MCF 10A (cell line): ENCODE measurements at regions of chr16 and their contacts with region 1.

Region 1: DNA sequence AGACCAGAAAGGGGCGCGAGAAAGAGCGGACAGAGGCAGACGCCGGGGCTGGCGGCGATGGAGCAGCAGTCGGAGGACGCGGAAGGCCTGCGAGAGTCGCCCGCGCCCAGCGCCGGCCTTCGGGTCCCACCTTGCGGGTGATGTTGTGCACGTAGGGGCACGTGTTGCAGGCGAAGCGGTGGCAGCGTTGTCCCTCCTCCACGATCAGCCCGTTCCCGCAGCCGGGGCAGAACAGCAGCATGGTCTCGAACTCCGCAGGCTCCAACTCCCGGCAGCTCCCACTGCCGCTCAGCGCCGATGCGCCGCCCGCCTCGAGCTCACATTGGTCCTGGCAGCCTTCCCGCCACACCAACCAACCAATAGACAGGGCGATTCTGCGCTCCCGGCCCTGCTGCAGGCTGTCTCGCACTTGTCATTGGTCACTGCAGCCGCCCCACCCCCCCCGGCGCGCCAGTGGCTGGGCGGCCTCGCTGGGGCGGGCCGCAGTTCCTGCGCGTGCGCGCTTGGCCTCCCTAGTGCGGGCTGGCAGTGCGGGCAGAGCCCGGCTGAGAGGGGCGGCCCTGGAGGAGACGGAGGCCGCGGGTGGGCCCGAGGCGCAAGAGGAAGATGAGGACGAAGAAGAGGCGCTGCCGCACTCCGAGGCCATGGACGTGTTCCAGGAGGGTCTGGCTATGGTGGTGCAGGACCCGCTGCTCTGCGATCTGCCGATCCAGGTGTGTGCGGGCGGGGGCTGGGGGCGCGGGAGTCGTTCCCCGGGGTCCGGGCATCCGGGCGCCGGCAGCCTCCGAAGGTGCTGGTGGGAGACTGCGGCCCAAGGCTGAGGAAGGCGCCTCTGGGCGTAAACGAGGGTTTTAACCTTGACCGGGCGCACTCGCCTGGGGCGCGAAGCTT is at the starts of genes POLR3K and SNRNP25:
- DNase-seq: peak; percentile 97
- H3K4me3 Mint-ChIP-seq: peak within 1 kb of the TSS; percentile 98
- H3K27ac Mint-ChIP-seq: peak within 1 kb of the TSS; percentile 92
- H3K4me1 Mint-ChIP-seq: peaks cover 5% of the 10 kb centered on the region
- H3K27me3 Mint-ChIP-seq: no peaks in the 10 kb centered on the region
- CTCF ChIP-seq: no peak
- total RNA-seq, gene POLR3K: 14.8 and 19.2 TPM in 2 replicates
- total RNA-seq, gene SNRNP25: 11.9 and 21.2 TPM in 2 replicates

Region 2: DNA sequence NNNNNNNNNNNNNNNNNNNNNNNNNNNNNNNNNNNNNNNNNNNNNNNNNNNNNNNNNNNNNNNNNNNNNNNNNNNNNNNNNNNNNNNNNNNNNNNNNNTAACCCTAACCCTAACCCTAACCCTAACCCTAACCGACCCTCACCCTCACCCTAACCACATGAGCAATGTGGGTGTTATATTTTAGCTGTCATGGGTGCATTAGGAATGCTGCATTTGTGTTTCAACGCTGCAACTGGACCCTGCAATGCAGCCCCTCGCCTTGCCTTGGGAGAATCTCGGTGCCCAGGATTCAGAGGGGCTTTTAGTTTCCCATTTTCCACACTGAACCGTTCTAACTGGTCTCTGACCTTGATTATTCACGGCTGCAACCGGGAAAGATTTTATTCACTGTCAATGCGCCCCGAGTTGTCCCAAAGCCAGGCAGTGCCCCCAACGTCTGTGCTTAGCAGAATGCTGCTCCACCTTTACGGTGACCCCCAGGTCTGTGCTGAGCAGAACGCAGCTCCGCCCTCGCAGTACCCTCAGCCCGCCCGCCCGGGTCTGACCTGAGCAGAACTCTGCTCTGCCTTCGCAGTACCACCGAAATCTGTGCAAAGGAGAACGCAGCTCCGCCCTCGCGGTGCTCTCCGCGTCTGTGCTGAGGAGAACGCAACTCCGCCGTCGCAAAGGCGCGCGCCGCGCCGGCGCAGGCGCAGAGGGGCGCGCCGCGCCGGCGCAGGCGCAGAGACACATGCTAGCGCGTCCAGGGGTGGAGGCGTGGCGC is 43.5 kb before region 1 on chr16:
- CTCF ChIA-PET with region 1: no interaction called
- POLR2A ChIA-PET with region 1: no interaction called
- intact Hi-C with region 1: no loop called
- DNase-seq: no peak
- H3K4me3 Mint-ChIP-seq: peak overlapping the region; percentile 61
- H3K27ac Mint-ChIP-seq: no peak overlapping the region
- H3K4me1 Mint-ChIP-seq: no peaks in the 10 kb centered on the region
- H3K27me3 Mint-ChIP-seq: no peaks in the 10 kb centered on the region
- CTCF ChIP-seq: no peak

Region 3: GRCh38 chr16:65671-66137 is 12.1 kb after region 1 on chr16:
- CTCF ChIA-PET with region 1: interaction called, 24 read pairs
- POLR2A ChIA-PET with region 1: interaction called, 7 read pairs
- intact Hi-C with region 1: no loop called
- DNase-seq: peak; percentile 76
- H3K4me3 Mint-ChIP-seq: no peak overlapping the region
- H3K27ac Mint-ChIP-seq: no peak overlapping the region
- H3K4me1 Mint-ChIP-seq: no peaks in the 10 kb centered on the region
- H3K27me3 Mint-ChIP-seq: no peaks in the 10 kb centered on the region
- CTCF ChIP-seq: peak; percentile 98

Region 4: DNA sequence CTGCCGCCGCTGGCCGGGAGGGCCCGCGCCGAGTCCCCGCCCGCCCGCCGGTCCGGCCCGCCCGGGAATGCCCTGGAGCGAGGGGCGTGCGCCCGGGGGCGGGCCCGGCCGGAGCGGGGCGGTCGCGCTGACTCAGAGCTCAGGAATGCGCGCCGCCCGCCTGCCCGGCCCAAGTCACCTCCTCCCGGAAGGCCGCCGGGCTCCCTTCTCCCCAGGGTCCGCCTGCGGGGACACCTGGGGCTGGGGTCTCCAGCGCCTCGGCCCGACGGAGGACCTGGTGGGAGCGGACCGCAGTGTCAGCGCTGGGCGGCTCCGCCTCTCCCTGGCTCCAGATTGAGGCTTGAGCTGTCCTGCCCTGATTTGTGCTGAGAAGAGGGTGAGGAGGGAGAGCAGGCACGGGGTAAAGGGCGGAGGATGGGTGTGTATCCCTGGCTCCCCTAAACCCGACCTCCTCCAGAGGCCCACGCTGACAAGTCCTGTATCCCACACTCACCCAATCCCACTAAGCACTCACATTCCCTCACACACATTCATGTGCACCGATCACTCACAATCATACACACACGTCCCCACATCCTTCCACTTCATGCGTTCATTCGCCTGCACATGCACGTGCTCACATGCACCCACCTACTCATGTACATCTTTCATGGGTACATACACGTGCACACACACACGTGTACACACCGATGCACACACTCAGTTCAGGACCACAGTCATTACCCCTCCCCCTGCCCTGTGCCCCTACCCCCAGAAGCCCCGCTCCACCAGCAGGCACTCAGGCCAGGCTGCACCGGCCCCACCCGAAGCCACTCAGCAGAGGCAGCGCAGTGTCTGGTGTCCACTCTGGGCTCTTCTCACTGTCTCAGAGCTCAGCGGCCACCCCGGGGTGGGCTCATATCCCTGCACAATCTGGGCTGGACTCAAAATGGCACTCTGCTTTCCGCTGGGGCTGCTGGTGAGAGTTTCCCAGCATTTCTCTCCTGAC is 19.3 kb after region 1 on chr16 and contains the start of gene RHBDF1:
- CTCF ChIA-PET with region 1: interaction called, 3 read pairs
- POLR2A ChIA-PET with region 1: interaction called, 10 read pairs
- intact Hi-C with region 1: no loop called
- DNase-seq: peak; percentile 42
- H3K4me3 Mint-ChIP-seq: peak within 1 kb of the TSS; percentile 71
- H3K27ac Mint-ChIP-seq: peak within 1 kb of the TSS; percentile 62
- H3K4me1 Mint-ChIP-seq: peaks cover 24% of the 10 kb centered on the region
- H3K27me3 Mint-ChIP-seq: no peaks in the 10 kb centered on the region
- CTCF ChIP-seq: no peak
- total RNA-seq, gene RHBDF1: 26.3 and 30.0 TPM in 2 replicates

Region 5: DNA sequence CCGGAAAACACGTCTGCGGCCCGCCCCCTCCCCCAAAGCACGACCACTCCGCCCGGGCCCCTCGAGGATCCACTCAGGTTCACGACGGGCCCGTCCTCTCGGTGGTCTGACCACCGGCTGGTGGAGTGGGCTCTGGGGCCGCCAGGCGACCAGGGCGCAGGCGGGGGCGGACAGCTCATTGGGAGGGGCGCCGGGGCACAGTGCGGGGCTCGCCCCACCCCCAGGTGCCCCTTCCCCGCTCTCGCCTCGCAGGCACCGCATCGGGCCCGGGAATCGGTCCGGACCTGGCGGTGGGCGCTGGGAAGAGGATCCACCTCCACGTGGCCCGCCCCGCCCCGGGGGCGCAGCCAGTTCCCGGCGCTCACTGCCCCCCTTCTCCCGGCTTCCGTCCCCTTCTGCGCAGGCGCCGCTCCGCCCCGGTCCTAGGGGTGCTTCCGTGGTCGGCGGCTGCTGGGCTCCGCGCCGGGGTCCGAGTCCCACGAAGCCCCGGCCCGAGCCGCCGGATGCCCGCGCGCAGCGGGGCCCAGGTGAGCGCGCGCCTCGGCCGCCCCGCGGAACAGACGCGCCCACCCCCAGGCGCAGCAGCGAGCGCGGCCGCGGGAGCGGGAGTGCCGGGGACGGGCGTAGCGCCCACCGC is 24.3 kb after region 1 on chr16 and contains the start of gene MPG:
- CTCF ChIA-PET with region 1: no interaction called
- POLR2A ChIA-PET with region 1: interaction called, 10 read pairs
- intact Hi-C with region 1: no loop called
- DNase-seq: peak; percentile 80
- H3K4me3 Mint-ChIP-seq: peak within 1 kb of the TSS; percentile 82
- H3K27ac Mint-ChIP-seq: peak within 1 kb of the TSS; percentile 85
- H3K4me1 Mint-ChIP-seq: peaks cover 22% of the 10 kb centered on the region
- H3K27me3 Mint-ChIP-seq: no peaks in the 10 kb centered on the region
- CTCF ChIP-seq: no peak
- total RNA-seq, gene MPG: 62.8 and 66.1 TPM in 2 replicates

Region 6: GRCh38 chr16:117379-118365 is 64.1 kb after region 1 on chr16:
- CTCF ChIA-PET with region 1: no interaction called
- POLR2A ChIA-PET with region 1: no interaction called
- intact Hi-C with region 1: no loop called
- DNase-seq: peak; percentile 69
- H3K4me3 Mint-ChIP-seq: no peak overlapping the region
- H3K27ac Mint-ChIP-seq: no peak overlapping the region
- H3K4me1 Mint-ChIP-seq: peaks cover 13% of the 10 kb centered on the region
- H3K27me3 Mint-ChIP-seq: no peaks in the 10 kb centered on the region
- CTCF ChIP-seq: peak; percentile 69

Region 7: GRCh38 chr16:228818-229730 is 175.5 kb after region 1 on chr16 and contains the start of gene LUC7L:
- CTCF ChIA-PET with region 1: no interaction called
- POLR2A ChIA-PET with region 1: no interaction called
- intact Hi-C with region 1: no loop called
- DNase-seq: peak; percentile 85
- H3K4me3 Mint-ChIP-seq: peak within 1 kb of the TSS; percentile 87
- H3K27ac Mint-ChIP-seq: peak within 1 kb of the TSS; percentile 84
- H3K4me1 Mint-ChIP-seq: peaks cover 5% of the 10 kb centered on the region
- H3K27me3 Mint-ChIP-seq: no peaks in the 10 kb centered on the region
- CTCF ChIP-seq: no peak
- total RNA-seq, gene LUC7L: 58.9 and 74.1 TPM in 2 replicates

Region 8: DNA sequence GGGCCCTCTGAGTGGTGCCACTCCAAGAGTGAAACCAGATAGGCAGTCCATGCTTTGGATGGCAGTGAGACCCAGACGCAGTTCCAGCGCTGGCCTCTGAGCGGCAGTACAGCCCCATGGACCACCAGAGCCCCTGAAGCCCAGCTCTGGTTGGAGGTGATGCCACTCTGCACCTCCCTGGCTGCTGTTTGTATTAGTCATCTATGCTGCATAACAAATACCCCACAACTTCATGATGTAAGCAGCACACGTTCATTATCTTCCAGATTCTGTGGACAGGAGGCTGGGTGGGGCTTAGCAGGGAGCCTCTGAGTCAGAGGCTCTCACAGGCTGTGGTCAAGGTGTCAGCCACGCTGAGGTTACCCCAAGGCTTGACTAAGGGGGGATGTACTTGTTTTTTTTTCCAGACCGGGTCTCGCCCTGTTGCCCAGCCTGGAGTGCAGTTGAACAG is 338.3 kb after region 1 on chr16:
- CTCF ChIA-PET with region 1: interaction called, 10 read pairs
- POLR2A ChIA-PET with region 1: no interaction called
- intact Hi-C with region 1: no loop called
- DNase-seq: peak; percentile 70
- H3K4me3 Mint-ChIP-seq: no peak overlapping the region
- H3K27ac Mint-ChIP-seq: no peak overlapping the region
- H3K4me1 Mint-ChIP-seq: no peaks in the 10 kb centered on the region
- H3K27me3 Mint-ChIP-seq: no peaks in the 10 kb centered on the region
- CTCF ChIP-seq: peak; percentile 88